Naive thymus-derived CD4-positive, alpha-beta T cell (primary cell): ENCODE measurements at regions of chr17 and their contacts with region 1.

Region 1: DNA sequence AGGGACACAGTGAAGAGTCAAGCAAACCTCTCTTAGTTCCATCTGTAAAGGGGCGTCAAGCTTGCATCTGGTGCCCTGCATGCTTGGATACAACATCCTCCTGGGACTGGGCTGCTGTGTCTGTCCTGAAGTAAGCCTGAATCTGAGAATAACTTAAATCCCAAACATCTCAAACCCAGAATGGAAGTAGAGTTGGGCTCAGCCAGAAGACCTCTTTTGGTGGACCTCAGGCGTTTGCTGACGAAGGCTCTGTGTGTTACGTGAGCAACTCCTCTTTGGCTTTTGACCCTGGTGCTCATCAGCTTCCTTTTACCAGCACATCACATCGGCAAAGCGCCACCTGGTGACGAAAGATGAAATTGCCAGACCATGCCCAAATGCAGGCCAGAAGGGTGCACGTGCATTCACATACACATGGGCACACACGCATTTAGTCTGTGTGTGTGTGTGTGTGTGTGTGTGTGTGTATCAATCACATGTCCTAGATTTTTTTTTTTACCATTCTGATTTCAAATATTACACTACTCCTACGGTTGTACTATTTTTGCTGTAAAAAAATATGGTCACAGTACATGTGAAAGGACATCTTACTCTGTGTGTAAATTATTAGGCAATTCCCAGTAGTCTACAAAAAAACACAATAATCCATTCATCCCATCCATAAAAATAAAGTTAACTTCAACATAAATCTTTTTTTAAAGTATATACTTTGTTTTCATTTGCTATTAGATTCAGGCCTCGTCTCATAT is 41.1 kb upstream of the FOXJ1 start:
- DNase-seq: peak; percentile 84 to 94 (median 89)
- ATAC-seq: peak; percentile 92
- H3K4me3 ChIP-seq: no peak overlapping the region
- H3K4me3 Mint-ChIP-seq: peak overlapping the region; percentile 11 to 77 (median 67)
- H3K27ac ChIP-seq: peak overlapping the region; percentile 52
- H3K27ac Mint-ChIP-seq: peak overlapping the region; percentile 91 to 99 (median 96)
- H3K4me1 ChIP-seq: peaks cover 33 to 63% of the 10 kb centered on the region in 2 donors
- H3K4me1 Mint-ChIP-seq: peaks cover 33 to 78% (median 61%) of the 10 kb centered on the region in 7 donors
- H3K27me3 ChIP-seq: no peaks in the 10 kb centered on the region
- H3K27me3 Mint-ChIP-seq: no peaks in the 10 kb centered on the region

Region 2: GRCh38 chr17:76014184-76014924 is 167.8 kb before region 1 on chr17:
- CTCF ChIA-PET with region 1: interaction called, 6 read pairs
- POLR2A ChIA-PET with region 1: no interaction called
- intact Hi-C with region 1: loop called in 1 of 2 experiments (anchors 1 kb)
- DNase-seq: peak; percentile 62 to 85 (median 77)
- ATAC-seq: peak; percentile 96
- H3K4me3 ChIP-seq: no peak overlapping the region
- H3K4me3 Mint-ChIP-seq: peak overlapping the region in 3 of 10 donors; percentile 40 to 68 (median 49)
- H3K27ac ChIP-seq: no peak overlapping the region
- H3K27ac Mint-ChIP-seq: peak overlapping the region in 5 of 9 donors; percentile 33 to 62 (median 40)
- H3K4me1 ChIP-seq: peaks cover 3 to 5% of the 10 kb centered on the region in 2 donors
- H3K4me1 Mint-ChIP-seq: peaks cover 0 to 11% (median 8%) of the 10 kb centered on the region in 7 donors
- H3K27me3 ChIP-seq: no peaks in the 10 kb centered on the region
- H3K27me3 Mint-ChIP-seq: no peaks in the 10 kb centered on the region

Region 3: GRCh38 chr17:76141212-76142038 is 40.8 kb before region 1 on chr17 and contains the start of gene FOXJ1:
- CTCF ChIA-PET with region 1: interaction called, 111 read pairs
- POLR2A ChIA-PET with region 1: interaction called, 141 read pairs
- intact Hi-C with region 1: loop called (anchors 1 to 2 kb)
- DNase-seq: peak; percentile 88 to 94 (median 91)
- ATAC-seq: peak; percentile 87
- H3K4me3 ChIP-seq: peak within 1 kb of the TSS; percentile 49
- H3K4me3 Mint-ChIP-seq: peak within 1 kb of the TSS; percentile 82 to 89 (median 85)
- H3K27ac ChIP-seq: peak within 1 kb of the TSS; percentile 61
- H3K27ac Mint-ChIP-seq: peak within 1 kb of the TSS; percentile 80 to 99 (median 93)
- H3K4me1 ChIP-seq: peaks cover 50 to 58% of the 10 kb centered on the region in 2 donors
- H3K4me1 Mint-ChIP-seq: peaks cover 42 to 63% (median 59%) of the 10 kb centered on the region in 7 donors
- H3K27me3 ChIP-seq: no peaks in the 10 kb centered on the region
- H3K27me3 Mint-ChIP-seq: peaks cover 0 to 26% (median 0%) of the 10 kb centered on the region in 5 donors
- total RNA-seq, gene FOXJ1: 0.29 to 2.2 (median 1.4) TPM

Region 4: GRCh38 chr17:76199469-76199868 is 17.3 kb after region 1 on chr17:
- CTCF ChIA-PET with region 1: interaction called, 6 read pairs
- POLR2A ChIA-PET with region 1: interaction called, 18 read pairs
- intact Hi-C with region 1: loop called in 1 of 2 experiments (anchors 2 kb)
- DNase-seq: peak in 7 of 9 donors; percentile 66 to 88 (median 84)
- ATAC-seq: peak; percentile 99
- H3K4me3 ChIP-seq: no peak overlapping the region
- H3K4me3 Mint-ChIP-seq: peak overlapping the region; percentile 48 to 76 (median 64)
- H3K27ac ChIP-seq: peak overlapping the region; percentile 79
- H3K27ac Mint-ChIP-seq: peak overlapping the region; percentile 88 to 98 (median 95)
- H3K4me1 ChIP-seq: peaks cover 23 to 66% of the 10 kb centered on the region in 2 donors
- H3K4me1 Mint-ChIP-seq: peaks cover 42 to 90% (median 86%) of the 10 kb centered on the region in 7 donors
- H3K27me3 ChIP-seq: no peaks in the 10 kb centered on the region
- H3K27me3 Mint-ChIP-seq: no peaks in the 10 kb centered on the region

Region 5: GRCh38 chr17:76252040-76252954 is 70.1 kb after region 1 on chr17:
- CTCF ChIA-PET with region 1: interaction called, 5 read pairs
- POLR2A ChIA-PET with region 1: interaction called, 30 read pairs
- intact Hi-C with region 1: no loop called
- DNase-seq: peak in 6 of 9 donors; percentile 37 to 63 (median 56)
- ATAC-seq: peak; percentile 86
- H3K4me3 ChIP-seq: peak overlapping the region; percentile 27
- H3K4me3 Mint-ChIP-seq: peak overlapping the region; percentile 69 to 86 (median 82)
- H3K27ac ChIP-seq: peak overlapping the region; percentile 68
- H3K27ac Mint-ChIP-seq: peak overlapping the region; percentile 88 to 99 (median 95)
- H3K4me1 ChIP-seq: peaks cover 33 to 47% of the 10 kb centered on the region in 2 donors
- H3K4me1 Mint-ChIP-seq: peaks cover 39 to 82% (median 65%) of the 10 kb centered on the region in 7 donors
- H3K27me3 ChIP-seq: no peaks in the 10 kb centered on the region
- H3K27me3 Mint-ChIP-seq: no peaks in the 10 kb centered on the region

Region 6: GRCh38 chr17:76278952-76279741 is 97.0 kb after region 1 on chr17:
- CTCF ChIA-PET with region 1: interaction called, 87 read pairs
- POLR2A ChIA-PET with region 1: interaction called, 240 read pairs
- intact Hi-C with region 1: loop called in 1 of 2 experiments (anchors 1 kb)
- DNase-seq: peak; percentile 69 to 89 (median 81)
- ATAC-seq: peak; percentile 87
- H3K4me3 ChIP-seq: no peak overlapping the region
- H3K4me3 Mint-ChIP-seq: no peak overlapping the region
- H3K27ac ChIP-seq: no peak overlapping the region
- H3K27ac Mint-ChIP-seq: peak overlapping the region in 7 of 9 donors; percentile 22 to 74 (median 46)
- H3K4me1 ChIP-seq: peaks cover 5 to 17% of the 10 kb centered on the region in 2 donors
- H3K4me1 Mint-ChIP-seq: peaks cover 7 to 29% (median 27%) of the 10 kb centered on the region in 7 donors
- H3K27me3 ChIP-seq: no peaks in the 10 kb centered on the region
- H3K27me3 Mint-ChIP-seq: no peaks in the 10 kb centered on the region

Region 7: GRCh38 chr17:76370261-76370993 is 188.2 kb after region 1 on chr17:
- CTCF ChIA-PET with region 1: no interaction called
- POLR2A ChIA-PET with region 1: no interaction called
- intact Hi-C with region 1: no loop called
- DNase-seq: no peak
- ATAC-seq: no peak
- H3K4me3 ChIP-seq: no peak overlapping the region
- H3K4me3 Mint-ChIP-seq: no peak overlapping the region
- H3K27ac ChIP-seq: no peak overlapping the region
- H3K27ac Mint-ChIP-seq: no peak overlapping the region
- H3K4me1 ChIP-seq: no peaks in the 10 kb centered on the region
- H3K4me1 Mint-ChIP-seq: no peaks in the 10 kb centered on the region
- H3K27me3 ChIP-seq: no peaks in the 10 kb centered on the region
- H3K27me3 Mint-ChIP-seq: no peaks in the 10 kb centered on the region